ENCODE measurements at regions of chr3 and their contacts with region 1.

Region 1: DNA sequence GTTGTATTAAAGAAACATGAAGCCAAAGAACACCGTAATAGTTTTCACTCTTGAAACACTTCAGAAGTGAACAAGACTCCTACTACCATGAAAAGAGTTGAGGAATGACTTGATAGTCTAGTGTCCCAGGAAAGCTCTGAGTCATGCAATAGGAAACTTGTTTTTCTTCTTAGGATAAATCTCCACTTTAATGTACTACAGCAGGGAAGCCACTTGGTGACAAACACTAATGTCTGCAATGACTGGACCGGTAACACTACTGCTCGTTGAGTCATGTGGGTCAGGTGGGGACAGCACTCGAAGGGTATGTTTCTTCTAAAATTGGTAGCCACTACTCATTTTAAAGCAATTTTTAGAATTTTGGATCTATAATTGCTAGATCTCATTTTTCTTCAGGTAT is 291.7 kb upstream of the CNTN3 start:
- DNase-seq: no peak
- ATAC-seq: no peak
- H3K4me3 Mint-ChIP-seq: no peak overlapping the region
- H3K27ac Mint-ChIP-seq: no peak overlapping the region
- H3K4me1 Mint-ChIP-seq: no peaks in the 10 kb centered on the region
- H3K27me3 Mint-ChIP-seq: no peaks in the 10 kb centered on the region

Region 2: DNA sequence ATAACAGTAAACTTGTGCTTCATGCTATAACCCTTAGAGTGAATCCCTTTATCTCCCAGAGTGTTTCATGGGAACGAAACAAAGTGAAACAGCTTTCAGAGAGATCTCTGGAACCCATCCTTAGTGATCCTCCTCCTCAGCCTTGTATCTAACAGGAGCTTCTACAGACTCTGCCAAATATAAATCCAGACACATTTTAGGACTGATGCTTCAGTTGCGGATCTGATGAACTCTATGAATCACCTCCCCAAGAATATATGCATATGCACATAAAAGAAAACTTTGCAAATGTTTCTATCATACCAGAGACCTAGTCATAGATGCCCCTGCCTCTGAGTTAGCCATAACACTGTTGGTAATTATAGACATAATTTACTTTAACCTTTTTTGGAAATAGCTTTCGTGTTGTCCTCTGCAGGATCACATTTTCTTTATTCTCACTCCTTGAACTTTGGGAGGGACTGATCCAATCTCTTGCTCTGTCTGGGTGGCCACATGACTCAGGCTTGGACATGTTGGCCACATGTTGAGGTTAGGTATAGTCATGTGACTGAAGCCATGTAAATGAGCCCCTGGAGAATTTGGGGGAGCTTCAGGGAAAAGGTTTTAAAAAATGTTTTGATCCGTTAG is 14.7 kb after region 1 on chr3:
- CTCF ChIA-PET with region 1: no interaction called
- POLR2A ChIA-PET with region 1: no interaction called
- intact Hi-C with region 1: loop called in 1 of 2 experiments (anchors 1 kb)
- DNase-seq: no peak
- ATAC-seq: no peak
- H3K4me3 Mint-ChIP-seq: no peak overlapping the region
- H3K27ac Mint-ChIP-seq: no peak overlapping the region
- H3K4me1 Mint-ChIP-seq: no peaks in the 10 kb centered on the region
- H3K27me3 Mint-ChIP-seq: no peaks in the 10 kb centered on the region

Region 3: DNA sequence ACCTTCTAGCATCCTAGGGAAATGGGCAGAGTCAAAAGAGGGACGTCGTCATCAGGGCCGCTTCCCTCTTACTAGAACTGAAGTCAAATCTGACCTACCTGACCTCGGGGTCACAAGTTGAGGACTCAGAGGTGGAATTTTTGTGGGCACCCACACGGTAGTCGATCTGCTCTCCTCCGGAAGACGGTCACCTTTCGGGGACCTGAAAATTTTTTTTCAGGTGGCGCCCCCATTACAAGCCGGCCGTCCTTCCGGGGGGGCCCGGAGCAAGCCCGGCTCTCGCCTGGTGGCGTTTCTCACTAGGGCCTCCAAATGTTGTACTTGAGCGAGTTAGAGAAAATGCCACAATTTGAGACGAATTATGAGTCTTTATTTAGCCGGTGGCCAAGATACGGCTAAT is 600.4 kb after region 1 on chr3:
- CTCF ChIA-PET with region 1: no interaction called
- POLR2A ChIA-PET with region 1: no interaction called
- intact Hi-C with region 1: no loop called
- DNase-seq: no peak
- ATAC-seq: no peak
- H3K4me3 Mint-ChIP-seq: no peak overlapping the region
- H3K27ac Mint-ChIP-seq: no peak overlapping the region
- H3K4me1 Mint-ChIP-seq: no peaks in the 10 kb centered on the region
- H3K27me3 Mint-ChIP-seq: no peaks in the 10 kb centered on the region